Kidney (tissue), 22 donors: ENCODE measurements at regions of chr12 and their contacts with region 1.

Region 1: DNA sequence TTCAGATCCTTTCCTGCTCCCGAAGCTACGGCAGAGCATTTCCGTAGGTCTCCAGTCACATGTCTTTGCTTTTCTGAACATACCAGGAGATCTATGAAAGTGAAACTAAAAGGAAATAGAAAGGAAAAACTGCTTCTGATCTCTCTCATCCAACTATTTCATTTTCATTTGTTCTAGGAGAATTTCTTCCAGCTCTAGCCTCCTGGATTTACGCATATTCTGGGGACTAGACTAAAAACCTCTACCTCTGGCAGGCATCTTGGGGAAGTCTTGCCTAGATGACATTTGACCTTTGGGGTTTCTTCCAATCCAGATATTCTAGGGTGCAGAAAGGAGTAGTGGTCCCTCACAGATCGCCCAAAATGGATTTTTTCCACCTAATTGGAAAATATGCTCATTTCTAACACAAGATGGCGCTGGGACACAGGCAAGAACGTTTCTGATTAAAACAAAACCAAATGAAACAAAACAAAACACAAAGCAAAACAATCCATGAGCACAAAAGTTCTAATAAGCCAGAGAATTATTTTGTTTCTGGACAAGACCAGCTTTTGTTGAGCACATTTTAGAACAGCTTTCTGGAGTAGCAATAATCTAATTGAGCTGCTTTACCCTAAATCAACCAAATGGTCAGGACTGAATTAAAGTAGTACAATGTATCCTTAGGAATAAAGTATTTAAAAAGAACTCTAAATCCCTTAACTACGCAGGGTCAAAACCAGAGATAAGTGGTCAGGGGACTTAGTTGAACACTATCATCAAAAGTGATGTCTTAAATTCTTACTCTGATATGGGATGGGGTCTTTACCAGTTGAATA is 12.3 kb upstream of the PARP11 start:
- DNase-seq: peak in 3 of 5 donors; percentile 39 to 86 (median 77)
- H3K4me3 ChIP-seq: peak overlapping the region; percentile 41 to 58 (median 54)
- H3K27ac ChIP-seq: peak overlapping the region in 1 of 2 donors; percentile 81
- H3K4me1 ChIP-seq: no peaks in the 10 kb centered on the region
- H3K27me3 ChIP-seq: no peaks in the 10 kb centered on the region
- CTCF ChIP-seq: peak; percentile 87

Region 2: DNA sequence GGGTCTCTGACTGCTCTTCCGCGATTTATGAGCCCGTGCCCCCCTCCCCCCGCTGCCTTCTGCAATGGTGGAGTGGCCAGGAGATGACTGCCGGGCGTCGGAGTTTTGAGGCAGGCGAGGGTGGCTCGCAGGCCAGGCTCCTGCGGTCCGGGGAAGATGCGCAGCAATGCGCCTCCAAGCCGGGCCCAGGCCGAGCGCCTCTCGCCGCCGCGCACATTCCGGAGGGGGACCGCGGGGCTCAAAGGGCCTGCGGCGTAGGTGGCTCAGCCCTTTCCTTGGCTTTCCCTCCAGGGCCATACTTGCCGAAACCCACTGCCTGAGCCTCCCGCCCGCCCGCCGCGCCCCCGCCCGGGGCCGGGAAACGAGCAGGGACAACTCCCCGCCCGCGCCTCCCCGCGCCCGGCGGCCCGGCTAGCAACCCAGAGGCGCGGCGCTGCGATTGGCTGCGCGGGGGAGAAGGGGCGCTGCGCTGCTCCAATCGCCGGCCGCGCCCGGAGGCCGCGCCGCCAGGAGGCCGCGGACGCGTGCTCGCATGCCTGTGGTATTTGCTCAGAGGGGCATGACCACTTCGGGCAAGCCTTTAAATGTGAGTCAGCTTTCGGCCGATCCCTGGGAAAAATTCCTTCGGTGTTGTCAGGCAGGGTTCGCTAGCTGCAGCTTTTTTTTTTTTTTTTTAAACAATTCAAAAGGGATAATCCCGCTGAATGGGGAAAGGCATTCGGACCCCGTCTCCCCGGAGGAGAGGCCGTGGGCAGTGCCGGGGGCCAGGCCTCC is 145.6 kb after region 1 on chr12:
- intact Hi-C with region 1: loop called (anchors 10 kb)
- DNase-seq: peak; percentile 95 to 98 (median 97)
- H3K4me3 ChIP-seq: peak overlapping the region in 2 of 3 donors; percentile 23 to 28
- H3K27ac ChIP-seq: peak overlapping the region; percentile 73 to 76
- H3K4me1 ChIP-seq: peaks cover 7 to 25% (median 13%) of the 10 kb centered on the region in 3 donors
- H3K27me3 ChIP-seq: no peaks in the 10 kb centered on the region
- CTCF ChIP-seq: no peak

Region 3: GRCh38 chr12:4276524-4277204 is 391.2 kb after region 1 on chr12:
- intact Hi-C with region 1: loop called (anchors 10 kb)
- DNase-seq: peak; percentile 89 to 98 (median 95)
- H3K4me3 ChIP-seq: peak overlapping the region in 1 of 3 donors; percentile 57
- H3K27ac ChIP-seq: no peak overlapping the region
- H3K4me1 ChIP-seq: peaks cover 0 to 24% (median 3%) of the 10 kb centered on the region in 3 donors
- H3K27me3 ChIP-seq: no peaks in the 10 kb centered on the region
- CTCF ChIP-seq: peak; percentile 92